H1 (cell line): ENCODE measurements at regions of chr17 and their contacts with region 1.

Region 1: DNA sequence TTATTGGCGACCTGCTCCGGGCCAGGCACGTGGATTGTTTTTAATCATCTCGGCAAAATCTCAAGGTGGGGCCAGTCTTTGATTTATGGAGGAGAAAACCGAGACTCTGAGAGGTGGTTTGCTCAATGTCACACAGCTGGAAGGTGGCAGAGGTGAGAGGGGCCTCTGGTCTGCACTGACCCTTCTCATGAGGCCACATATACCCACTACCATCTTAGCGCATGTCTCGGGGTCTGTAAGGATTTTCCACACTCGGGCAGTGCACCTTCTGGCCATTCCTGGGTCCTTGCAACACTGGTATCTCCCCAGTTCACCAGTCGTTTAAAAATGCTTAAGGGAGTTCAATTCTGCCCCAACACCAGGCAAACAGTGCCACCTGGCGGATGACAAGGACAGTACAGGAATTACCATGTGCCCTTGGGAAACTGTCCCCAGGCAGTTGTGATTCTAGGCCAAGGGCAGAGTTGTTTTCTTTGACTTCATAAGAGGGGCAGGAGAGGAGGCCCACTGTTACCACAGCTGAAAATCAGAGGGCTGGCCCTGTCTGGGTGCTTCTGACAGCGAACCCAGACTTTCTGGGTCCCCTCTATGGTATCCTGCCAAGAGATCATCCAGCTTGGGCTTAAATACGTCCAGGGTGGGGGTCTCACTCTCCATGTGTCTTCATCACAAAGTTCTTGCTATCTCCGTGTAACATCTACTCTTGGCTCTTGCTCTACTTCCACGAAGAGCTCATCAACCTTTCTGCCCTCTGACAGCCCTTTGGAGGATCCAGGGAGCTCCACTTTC is 39.4 kb upstream of the RAI1 start:
- DNase-seq: peak; percentile 65 to 90
- H3K4me3 ChIP-seq: no peak overlapping the region
- H3K27ac ChIP-seq: no peak overlapping the region
- H3K4me1 ChIP-seq: no peaks in the 10 kb centered on the region
- H3K27me3 ChIP-seq: no peaks in the 10 kb centered on the region
- CTCF ChIP-seq: peak; percentile 87 to 96 (median 93)
- EP300 ChIP-seq: no peak
- POLR2A ChIP-seq: no peak
- RAD21 ChIP-seq: peak; percentile 99

Region 2: GRCh38 chr17:17376362-17376761 is 265.5 kb before region 1 on chr17:
- CTCF ChIA-PET with region 1: interaction called, 11 read pairs
- POLR2A ChIA-PET with region 1: no interaction called
- DNase-seq: no peak
- H3K4me3 ChIP-seq: no peak overlapping the region
- H3K27ac ChIP-seq: no peak overlapping the region
- H3K4me1 ChIP-seq: no peaks in the 10 kb centered on the region
- H3K27me3 ChIP-seq: no peaks in the 10 kb centered on the region; a peak in 2 of 7 replicates
- CTCF ChIP-seq: no peak
- EP300 ChIP-seq: no peak
- POLR2A ChIP-seq: no peak
- RAD21 ChIP-seq: no peak

Region 3: GRCh38 chr17:17506811-17507464 is 134.9 kb before region 1 on chr17:
- CTCF ChIA-PET with region 1: interaction called, 10 read pairs
- POLR2A ChIA-PET with region 1: no interaction called
- DNase-seq: no peak
- H3K4me3 ChIP-seq: no peak overlapping the region
- H3K27ac ChIP-seq: no peak overlapping the region
- H3K4me1 ChIP-seq: peaks cover 0 to 2% (median 0%) of the 10 kb centered on the region in 4 experiments; a peak in 1 of 7 replicates
- H3K27me3 ChIP-seq: no peaks in the 10 kb centered on the region; a peak in 1 of 7 replicates
- CTCF ChIP-seq: no peak
- EP300 ChIP-seq: no peak
- POLR2A ChIP-seq: no peak
- RAD21 ChIP-seq: no peak

Region 4: DNA sequence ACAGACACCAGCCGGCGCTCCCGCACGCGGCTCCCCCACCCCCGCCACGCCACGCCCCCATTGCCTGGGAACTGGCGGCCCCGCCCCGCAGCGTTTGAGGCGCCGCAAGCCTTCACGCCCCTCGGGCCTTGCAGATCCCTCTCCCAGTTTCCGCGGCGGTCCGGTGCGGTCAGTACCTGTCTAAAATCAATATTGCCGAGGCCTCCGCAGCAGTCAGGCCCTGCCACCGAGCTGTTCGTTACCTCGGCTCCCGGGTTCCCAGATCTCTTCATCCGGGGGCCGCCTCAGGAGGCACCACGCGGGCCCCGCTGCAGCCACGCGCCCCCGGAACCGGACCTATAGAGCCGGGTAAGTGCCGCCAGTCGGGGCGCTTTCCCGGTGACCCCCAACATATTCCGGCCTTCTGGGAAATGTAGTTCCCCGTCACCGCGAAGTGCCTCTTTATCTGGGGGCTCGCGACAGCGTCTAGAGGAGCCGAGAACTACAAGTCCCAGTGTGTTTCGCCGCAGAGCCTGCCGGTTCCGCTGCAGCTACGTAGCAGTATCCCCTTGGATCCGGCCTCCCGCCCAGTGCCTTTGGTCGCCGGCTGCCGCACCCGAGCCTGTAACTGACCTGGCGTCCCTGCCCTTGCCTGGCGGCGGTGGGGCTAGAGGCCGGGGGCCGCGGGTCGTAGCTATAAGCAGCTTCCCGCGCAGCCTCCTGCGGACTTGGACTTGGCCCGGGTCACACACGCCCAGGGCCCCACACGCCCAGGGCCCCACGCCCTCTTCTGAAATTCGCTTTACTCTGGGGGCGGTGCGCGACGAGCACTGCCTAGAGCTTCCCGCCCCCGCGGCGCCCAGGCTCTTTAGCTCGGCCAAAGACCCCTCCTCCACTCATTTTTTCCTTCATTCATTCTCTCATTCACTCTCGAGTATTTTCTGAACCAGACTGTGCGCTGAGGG is 50.2 kb before region 1 on chr17 and contains the start of gene PEMT:
- CTCF ChIA-PET with region 1: interaction called, 17 read pairs
- POLR2A ChIA-PET with region 1: interaction called, 5 read pairs
- DNase-seq: peak; percentile 90 to 93
- H3K4me3 ChIP-seq: peak within 1 kb of the TSS; percentile 69 to 87 (median 86)
- H3K27ac ChIP-seq: peak within 1 kb of the TSS; percentile 60; the same call in 1 of the 2 replicates
- H3K4me1 ChIP-seq: peaks cover 0 to 10% (median 2%) of the 10 kb centered on the region in 4 experiments; a peak in 4 of 7 replicates
- H3K27me3 ChIP-seq: no peaks in the 10 kb centered on the region
- CTCF ChIP-seq: no peak
- EP300 ChIP-seq: peak in 1 of 2 experiments; percentile 9; a peak in 1 of 3 replicates
- POLR2A ChIP-seq: peak; percentile 4 to 78; a peak in 2 of 3 replicates
- RAD21 ChIP-seq: no peak
- total RNA-seq, gene PEMT: 40.1 and 42.0 TPM in 2 replicates

Region 5: DNA sequence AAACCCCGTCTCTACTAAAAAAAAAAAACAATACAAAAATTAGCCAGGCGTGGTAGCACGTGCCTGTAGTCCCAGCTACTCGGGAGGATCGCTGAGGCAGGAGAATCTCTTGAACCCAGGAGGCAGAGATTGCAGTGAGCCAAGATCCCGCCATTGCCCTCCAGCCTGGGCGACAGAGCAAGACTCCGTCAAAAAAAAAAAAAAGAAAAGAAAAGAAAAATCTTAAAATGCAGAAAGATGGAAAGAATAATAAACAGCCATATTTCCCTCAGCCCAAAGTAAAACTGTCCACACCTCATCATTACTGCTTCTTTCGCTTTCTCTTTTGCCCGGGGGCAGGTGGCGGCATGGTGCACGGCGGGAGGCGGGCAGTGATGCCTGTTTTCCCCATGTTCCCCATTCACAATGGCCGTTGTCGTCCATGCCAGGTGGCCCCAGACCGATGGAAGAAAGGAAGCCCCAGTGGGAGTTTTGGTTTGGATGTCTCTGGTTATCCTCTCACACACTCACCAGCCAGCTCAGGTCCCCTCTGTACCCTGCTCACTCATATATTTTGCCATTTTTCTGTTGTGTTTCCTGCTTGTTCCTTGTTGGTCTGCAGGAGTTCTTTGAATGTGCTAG is 13.3 kb before region 1 on chr17:
- CTCF ChIA-PET with region 1: interaction called, 24 read pairs
- POLR2A ChIA-PET with region 1: no interaction called
- DNase-seq: no peak
- H3K4me3 ChIP-seq: no peak overlapping the region
- H3K27ac ChIP-seq: no peak overlapping the region
- H3K4me1 ChIP-seq: peaks cover 0 to 16% (median 15%) of the 10 kb centered on the region in 4 experiments; a peak in 6 of 7 replicates
- H3K27me3 ChIP-seq: no peaks in the 10 kb centered on the region; a peak in 1 of 7 replicates
- CTCF ChIP-seq: no peak
- EP300 ChIP-seq: no peak
- POLR2A ChIP-seq: no peak
- RAD21 ChIP-seq: no peak